Activated B cell treated with CpG ODN at 0.5 μM for 24 hours (primary cell): ENCODE measurements at regions of chr17 and their contacts with region 1.

Region 1: GRCh38 chr17:40340880-40341807 is 23.4 kb downstream of the GJD3 start:
- DNase-seq: peak; percentile 82
- ATAC-seq: peak; percentile 83
- H3K4me3 Mint-ChIP-seq: peak overlapping the region; percentile 85
- H3K27ac Mint-ChIP-seq: peak overlapping the region; percentile 81
- H3K4me1 Mint-ChIP-seq: peaks cover 77% of the 10 kb centered on the region
- H3K27me3 Mint-ChIP-seq: no peaks in the 10 kb centered on the region
- CTCF ChIP-seq: no peak

Region 2: GRCh38 chr17:39636927-39637736 is 704.0 kb before region 1 on chr17 and contains the start of gene STARD3:
- CTCF ChIA-PET with region 1: no interaction called
- POLR2A ChIA-PET with region 1: no interaction called
- intact Hi-C with region 1: no loop called
- DNase-seq: peak; percentile 90
- ATAC-seq: peak; percentile 92
- H3K4me3 Mint-ChIP-seq: peak within 1 kb of the TSS; percentile 90
- H3K27ac Mint-ChIP-seq: peak within 1 kb of the TSS; percentile 86
- H3K4me1 Mint-ChIP-seq: peaks cover 63% of the 10 kb centered on the region
- H3K27me3 Mint-ChIP-seq: no peaks in the 10 kb centered on the region
- CTCF ChIP-seq: no peak
- total RNA-seq, gene STARD3: 51.8 and 58.2 TPM in 2 replicates

Region 3: DNA sequence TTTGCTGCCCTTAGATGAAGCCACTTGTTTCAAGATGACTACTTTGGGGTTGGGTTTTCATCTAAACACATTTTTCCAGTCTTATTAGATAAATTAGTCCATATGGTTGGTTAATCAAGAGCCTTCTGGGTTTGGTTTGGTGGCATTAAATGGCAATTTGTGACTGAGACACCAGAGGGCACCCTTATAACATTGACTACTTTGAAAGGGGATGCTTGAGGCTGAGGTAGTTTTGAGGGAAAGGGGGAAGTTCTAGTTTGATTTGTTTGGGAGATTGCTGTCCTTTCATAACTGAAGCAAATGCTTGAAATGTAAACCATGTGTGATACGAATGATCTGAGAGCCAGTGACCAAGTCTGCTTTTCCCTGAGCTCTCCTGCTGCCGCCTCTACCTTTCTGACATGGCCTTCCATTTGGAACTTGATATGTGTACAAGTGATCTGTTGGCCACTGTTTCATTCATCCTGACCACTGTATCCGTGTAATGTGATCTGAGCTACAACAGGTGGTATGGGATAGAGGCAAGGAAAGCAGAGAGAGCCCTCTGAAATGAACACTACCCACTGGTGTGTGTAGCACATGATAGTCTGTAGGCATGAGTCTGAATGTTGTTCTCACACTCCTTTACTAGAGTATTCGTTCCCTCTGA is 38.0 kb before region 1 on chr17:
- CTCF ChIA-PET with region 1: interaction called, 466 read pairs
- POLR2A ChIA-PET with region 1: interaction called, 5 read pairs
- intact Hi-C with region 1: loop called (anchors 1 kb)
- DNase-seq: no peak
- ATAC-seq: peak; percentile 83
- H3K4me3 Mint-ChIP-seq: no peak overlapping the region
- H3K27ac Mint-ChIP-seq: no peak overlapping the region
- H3K4me1 Mint-ChIP-seq: peaks cover 7% of the 10 kb centered on the region
- H3K27me3 Mint-ChIP-seq: no peaks in the 10 kb centered on the region
- CTCF ChIP-seq: no peak